Breast epithelium (tissue), 4 donors: ENCODE measurements at regions of chr13 and their contacts with region 1.

Region 1: DNA sequence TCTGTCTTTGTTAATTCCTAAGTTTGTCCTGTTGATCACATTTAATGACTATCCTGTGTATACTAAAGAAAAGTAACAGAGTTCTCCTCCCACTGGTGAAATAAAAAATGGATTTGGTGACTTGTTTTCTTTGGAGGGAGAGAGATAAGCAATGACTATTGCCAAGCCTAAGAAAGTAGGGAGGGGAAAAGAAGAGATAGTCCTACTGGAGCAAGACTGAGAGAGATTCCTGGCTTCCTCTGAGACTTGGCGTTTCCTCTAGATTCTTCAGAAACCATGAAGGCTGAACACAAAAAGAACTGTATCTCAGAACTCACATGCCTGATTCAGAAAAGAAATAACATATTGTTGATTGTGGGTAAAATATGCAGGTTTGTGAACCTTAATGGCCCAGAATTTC is 406.5 kb downstream of the FOXO1 start:
- DNase-seq: no peak
- H3K4me3 ChIP-seq: no peak overlapping the region
- H3K27ac ChIP-seq: no peak overlapping the region
- H3K4me1 ChIP-seq: no peaks in the 10 kb centered on the region
- H3K27me3 ChIP-seq: no peaks in the 10 kb centered on the region
- CTCF ChIP-seq: no peak
- POLR2A ChIP-seq: no peak

Region 2: DNA sequence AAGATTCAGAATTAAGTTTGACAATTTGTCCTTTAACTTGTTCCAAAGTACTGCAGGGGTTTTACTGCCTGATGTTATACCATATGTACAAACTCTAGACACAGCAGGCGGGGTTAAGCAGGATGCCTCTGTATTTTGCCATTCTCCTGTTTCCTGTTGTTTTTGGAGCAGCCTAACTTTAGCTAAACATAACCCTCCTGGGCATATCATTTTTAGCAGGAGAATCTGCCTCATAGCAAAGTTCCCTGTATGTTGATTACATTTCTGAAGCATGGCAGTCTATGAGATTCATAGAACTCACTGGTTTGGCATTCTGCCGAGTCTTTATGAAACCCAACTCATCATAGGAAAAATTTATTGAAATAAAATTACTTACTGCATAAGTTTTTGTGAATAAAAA is 662.1 kb before region 1 on chr13:
- intact Hi-C with region 1: no loop called
- DNase-seq: no peak
- H3K4me3 ChIP-seq: peak overlapping the region in 2 of 3 donors; percentile 1 to 97
- H3K27ac ChIP-seq: no peak overlapping the region
- H3K4me1 ChIP-seq: no peaks in the 10 kb centered on the region
- H3K27me3 ChIP-seq: no peaks in the 10 kb centered on the region
- CTCF ChIP-seq: no peak
- POLR2A ChIP-seq: no peak

Region 3: DNA sequence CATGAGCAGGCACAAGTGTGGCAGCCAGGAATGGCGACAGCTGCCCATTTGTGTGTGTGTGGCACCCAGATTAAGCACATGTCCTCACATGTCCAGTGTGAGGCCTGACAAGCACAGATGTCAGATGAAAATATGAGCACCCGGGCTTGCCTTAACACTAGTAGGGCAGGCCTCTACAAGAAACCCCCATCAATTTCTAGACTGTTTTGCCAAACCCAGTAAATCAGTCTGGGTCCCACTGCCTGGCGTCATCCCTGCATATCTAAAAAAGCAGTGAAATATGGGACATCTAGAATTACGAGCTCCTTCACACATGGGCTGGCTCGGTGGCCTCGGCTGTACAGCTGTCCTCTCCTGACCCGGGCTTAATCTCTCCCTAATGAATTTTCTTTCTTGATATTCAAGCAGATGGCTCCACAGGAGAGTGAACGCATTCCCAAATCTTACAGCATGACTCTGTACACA is 26.1 kb before region 1 on chr13:
- intact Hi-C with region 1: no loop called
- DNase-seq: peak in 1 of 2 donors; percentile 85
- H3K4me3 ChIP-seq: no peak overlapping the region
- H3K27ac ChIP-seq: peak overlapping the region; percentile 65 to 90
- H3K4me1 ChIP-seq: peaks cover 3 to 4% of the 10 kb centered on the region in 2 donors
- H3K27me3 ChIP-seq: no peaks in the 10 kb centered on the region
- CTCF ChIP-seq: no peak
- POLR2A ChIP-seq: no peak

Region 4: GRCh38 chr13:41079725-41080124 is 819.8 kb after region 1 on chr13:
- intact Hi-C with region 1: loop called (anchors 5 kb)
- DNase-seq: no peak
- H3K4me3 ChIP-seq: no peak overlapping the region
- H3K27ac ChIP-seq: no peak overlapping the region
- H3K4me1 ChIP-seq: no peaks in the 10 kb centered on the region
- H3K27me3 ChIP-seq: no peaks in the 10 kb centered on the region
- CTCF ChIP-seq: no peak
- POLR2A ChIP-seq: no peak